Right ventricle myocardium inferior (tissue), 1 donor: ENCODE measurements at regions of chr18 and their contacts with region 1.

Region 1: DNA sequence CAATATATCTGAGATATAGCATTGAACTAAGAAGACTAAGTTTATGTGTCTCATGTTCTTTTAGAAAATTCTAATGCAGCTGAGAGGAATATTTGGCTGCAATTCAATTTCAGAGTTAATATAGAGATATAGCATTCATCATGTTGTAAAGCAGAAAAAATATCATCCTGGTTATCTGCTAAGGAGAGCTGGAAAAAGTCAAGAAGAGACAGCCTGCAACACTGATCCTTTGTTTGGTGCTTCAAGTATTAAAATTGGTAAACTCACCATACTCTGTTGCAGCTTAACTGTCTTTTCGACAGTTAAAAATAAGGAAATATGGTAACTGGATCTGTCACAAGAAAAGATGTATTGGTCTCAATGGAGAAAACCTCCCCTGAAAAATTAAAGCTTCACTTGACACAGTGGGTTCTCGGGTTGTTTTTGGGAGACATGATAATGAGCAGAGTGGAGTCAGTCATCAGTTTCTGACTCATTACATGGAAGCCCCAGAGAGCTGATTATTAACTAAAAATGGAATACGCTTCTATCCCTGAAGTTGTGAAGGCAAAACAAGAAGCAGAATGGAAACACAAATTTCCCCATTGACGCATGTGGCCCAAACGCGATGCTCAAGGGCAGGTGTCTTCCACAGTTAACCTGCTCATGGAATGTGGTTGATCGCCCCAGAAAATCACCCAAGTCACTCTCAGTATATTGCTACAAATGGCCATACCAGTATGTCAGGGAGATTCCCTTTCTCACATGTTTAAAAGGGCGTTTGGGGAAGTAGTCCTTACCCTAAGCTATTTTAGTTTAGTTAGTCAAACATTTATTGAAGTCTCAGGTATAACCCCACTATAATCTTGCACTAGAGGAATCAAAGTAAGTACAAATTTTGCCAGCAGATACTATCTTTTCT is 8.2 kb downstream of the BCL2 start:
- DNase-seq: no peak
- ATAC-seq: no peak

Region 2: GRCh38 chr18:63237881-63238667 is 73.3 kb before region 1 on chr18:
- intact Hi-C with region 1: loop called (anchors 5 kb)
- DNase-seq: no peak
- ATAC-seq: peak; percentile 78

Region 3: DNA sequence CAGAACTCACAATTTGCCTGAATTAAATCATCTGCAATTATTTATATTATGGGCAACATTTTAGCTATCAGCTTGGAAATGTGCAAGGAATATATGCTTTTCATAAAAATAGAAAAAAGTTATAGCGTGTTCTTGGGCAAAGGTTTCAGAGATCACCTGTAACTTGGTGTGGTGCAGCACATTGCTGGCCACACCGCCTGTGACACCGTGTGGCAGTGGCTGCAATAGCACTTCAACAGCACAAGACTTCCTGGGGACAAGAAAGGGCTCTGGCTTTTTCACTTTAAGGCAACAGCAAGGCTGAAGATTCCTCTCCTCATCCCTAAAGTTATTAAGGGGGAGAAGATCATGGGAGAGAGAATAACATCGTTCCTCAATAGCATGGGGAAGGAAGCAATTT is 365.2 kb after region 1 on chr18:
- intact Hi-C with region 1: no loop called
- DNase-seq: no peak
- ATAC-seq: no peak